ENCODE measurements at regions of chr7 and their contacts with region 1.

Region 1: GRCh38 chr7:28503396-28503795 is 91.1 kb downstream of the CREB5 start:
- DNase-seq: no peak

Region 2: DNA sequence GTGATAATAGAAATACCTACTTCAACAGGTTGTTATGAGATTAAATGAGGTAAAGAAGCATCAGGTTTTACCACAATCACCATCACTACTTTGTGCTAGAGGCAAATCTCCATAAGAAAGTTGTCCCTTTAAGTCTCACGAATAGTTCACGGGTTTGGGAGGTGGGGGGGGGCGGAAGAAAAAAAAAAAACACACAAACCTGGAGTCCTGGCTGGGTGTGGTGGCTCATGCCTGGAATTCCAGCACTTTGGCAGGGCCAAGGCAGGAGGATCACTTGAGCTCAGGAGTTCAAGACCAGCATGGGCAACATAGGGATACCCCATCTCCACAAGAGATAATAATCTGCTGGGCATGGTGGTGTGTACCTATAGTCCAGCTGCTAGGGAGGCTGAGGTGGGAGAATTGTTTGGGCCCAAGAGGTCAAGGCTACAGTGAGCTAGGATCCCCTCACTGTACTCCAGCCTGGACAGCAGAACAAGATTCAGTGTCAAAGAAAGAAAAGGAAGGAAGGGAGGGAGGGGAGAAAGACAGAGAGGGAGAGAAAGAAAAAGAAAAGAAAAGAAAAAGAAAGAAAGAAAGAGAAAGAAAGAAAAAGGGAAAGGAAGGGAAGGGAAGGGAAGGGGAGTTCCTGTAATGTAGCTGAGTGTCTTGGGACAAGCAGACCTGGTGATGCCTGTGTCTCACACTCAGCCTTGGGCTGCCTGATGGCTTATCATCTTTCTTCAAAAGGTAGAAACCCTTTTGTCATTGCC is 140.4 kb after region 1 on chr7:
- intact Hi-C with region 1: no loop called
- DNase-seq: no peak

Region 3: DNA sequence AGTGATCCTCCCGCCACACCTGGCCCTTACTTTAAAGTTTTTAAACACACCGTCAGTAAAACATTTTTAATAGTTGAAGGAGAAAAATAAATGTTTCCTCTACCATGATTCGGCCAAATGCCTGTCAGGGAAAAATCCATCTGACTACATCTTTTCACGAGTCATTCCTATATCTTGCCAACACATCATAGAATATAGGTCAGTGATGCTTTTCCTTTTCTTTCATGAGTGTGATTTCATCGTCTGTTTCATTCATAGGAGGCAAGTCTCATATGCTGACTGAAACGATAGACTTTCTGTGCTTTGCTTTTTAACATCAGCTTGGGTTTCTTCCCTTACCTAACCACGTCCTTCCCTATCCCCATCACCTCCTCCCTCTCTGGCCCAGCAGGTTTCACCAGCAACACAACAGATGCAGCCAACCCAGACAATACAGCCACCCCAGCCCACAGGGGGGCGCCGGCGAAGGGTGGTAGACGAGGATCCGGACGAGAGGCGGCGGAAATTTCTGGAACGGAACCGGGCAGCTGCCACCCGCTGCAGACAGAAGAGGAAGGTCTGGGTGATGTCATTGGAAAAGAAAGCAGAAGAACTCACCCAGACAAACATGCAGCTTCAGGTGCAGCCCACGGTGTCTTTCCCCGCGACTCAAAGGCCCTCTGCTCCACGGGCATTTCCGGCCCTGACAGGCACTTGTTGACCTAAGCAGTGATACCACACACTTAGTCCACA is 305.6 kb after region 1 on chr7:
- intact Hi-C with region 1: loop called in 1 of 2 experiments (anchors 5 kb)
- DNase-seq: no peak

Region 4: GRCh38 chr7:29105752-29106668 is 602.6 kb after region 1 on chr7:
- intact Hi-C with region 1: no loop called
- DNase-seq: no peak

Measured in posterior vena cava (tissue), 2 donors.